ENCODE measurements at regions of chr19 and their contacts with region 1.

Region 1: GRCh38 chr19:31513841-31514240 is 164.6 kb upstream of the TSHZ3 start:
- DNase-seq: no peak
- H3K4me3 ChIP-seq: no peak overlapping the region
- H3K27ac ChIP-seq: no peak overlapping the region
- H3K4me1 ChIP-seq: no peaks in the 10 kb centered on the region
- CTCF ChIP-seq: no peak

Region 2: DNA sequence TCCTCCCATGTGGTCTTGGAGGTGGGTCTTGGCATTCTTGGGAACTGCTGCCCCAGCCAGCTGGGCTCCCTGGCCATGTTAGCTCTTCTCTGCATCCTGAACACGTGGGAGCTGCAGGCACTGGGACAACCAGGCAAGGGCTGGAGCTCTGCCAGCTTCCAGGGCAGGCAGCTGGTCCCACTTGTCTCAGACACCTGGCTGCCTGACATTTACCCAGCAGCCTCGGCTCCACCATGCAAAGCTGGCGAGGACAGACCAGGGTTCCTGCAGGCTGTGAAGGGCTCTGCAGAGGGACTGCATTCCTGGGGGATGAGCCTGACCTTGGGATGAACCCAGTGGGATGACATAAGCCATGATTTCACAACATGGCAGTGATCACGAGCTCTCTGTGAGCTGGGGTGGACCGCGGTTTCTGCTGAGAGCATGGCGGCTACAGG is 65.6 kb before region 1 on chr19:
- CTCF ChIA-PET with region 1: no interaction called
- POLR2A ChIA-PET with region 1: no interaction called
- intact Hi-C with region 1: no loop called
- DNase-seq: no peak
- H3K4me3 ChIP-seq: no peak overlapping the region
- H3K27ac ChIP-seq: no peak overlapping the region
- H3K4me1 ChIP-seq: no peaks in the 10 kb centered on the region
- CTCF ChIP-seq: no peak

Region 3: GRCh38 chr19:31478241-31478640 is 35.6 kb before region 1 on chr19:
- CTCF ChIA-PET with region 1: interaction called, 10 read pairs
- POLR2A ChIA-PET with region 1: no interaction called
- intact Hi-C with region 1: no loop called
- DNase-seq: no peak
- H3K4me3 ChIP-seq: no peak overlapping the region
- H3K27ac ChIP-seq: no peak overlapping the region
- H3K4me1 ChIP-seq: no peaks in the 10 kb centered on the region
- CTCF ChIP-seq: no peak

Region 4: DNA sequence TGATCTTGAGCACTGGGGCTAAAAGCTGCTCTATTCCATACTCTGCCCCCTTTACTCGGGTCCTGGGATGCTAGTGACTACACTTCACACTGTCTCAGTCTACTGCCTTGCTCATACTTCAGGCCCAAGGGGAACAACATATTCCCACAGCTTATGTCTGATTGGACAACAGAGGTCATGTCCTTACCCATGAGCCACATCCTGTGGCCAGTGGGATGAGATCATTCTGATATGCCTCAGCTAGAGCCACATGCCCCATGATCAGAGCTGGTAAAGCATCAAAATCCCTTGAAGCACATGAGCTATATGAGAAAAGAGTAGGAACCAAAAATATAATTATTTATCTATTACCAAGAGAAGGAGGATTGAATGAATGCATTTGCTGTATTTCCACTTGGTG is 125.5 kb after region 1 on chr19:
- CTCF ChIA-PET with region 1: no interaction called
- POLR2A ChIA-PET with region 1: no interaction called
- intact Hi-C with region 1: no loop called
- DNase-seq: no peak
- H3K4me3 ChIP-seq: no peak overlapping the region
- H3K27ac ChIP-seq: no peak overlapping the region
- H3K4me1 ChIP-seq: no peaks in the 10 kb centered on the region
- CTCF ChIP-seq: no peak